ENCODE measurements at regions of chr2 and their contacts with region 1.

Region 1: GRCh38 chr2:8685697-8686358 is 4.0 kb downstream of the ID2 start:
- DNase-seq: peak; percentile 77
- H3K4me3 ChIP-seq: peak overlapping the region; percentile 63 to 66
- H3K27ac ChIP-seq: peak overlapping the region in 1 of 2 donors; percentile 22
- H3K4me1 ChIP-seq: peaks cover 4% of the 10 kb centered on the region
- H3K27me3 ChIP-seq: no peaks in the 10 kb centered on the region
- CTCF ChIP-seq: peak; percentile 98 to 99 (median 98)
- POLR2A ChIP-seq: no peak

Region 2: GRCh38 chr2:7430869-7431641 is 1254.8 kb before region 1 on chr2:
- intact Hi-C with region 1: loop called (anchors 5 kb)
- DNase-seq: peak; percentile 32
- H3K4me3 ChIP-seq: peak overlapping the region; percentile 24 to 54
- H3K27ac ChIP-seq: no peak overlapping the region
- H3K4me1 ChIP-seq: peaks cover 8% of the 10 kb centered on the region
- H3K27me3 ChIP-seq: no peaks in the 10 kb centered on the region
- CTCF ChIP-seq: no peak
- POLR2A ChIP-seq: no peak